Ovary (tissue), 10 donors: ENCODE measurements at regions of chr1 and their contacts with region 1.

Region 1: GRCh38 chr1:77120950-77121349 is 98.3 kb downstream of the PIGK start:
- DNase-seq: no peak
- H3K4me3 ChIP-seq: no peak overlapping the region
- H3K27ac ChIP-seq: no peak overlapping the region
- H3K4me1 ChIP-seq: no peaks in the 10 kb centered on the region
- H3K27me3 ChIP-seq: no peaks in the 10 kb centered on the region
- CTCF ChIP-seq: no peak
- EP300 ChIP-seq: no peak
- POLR2A ChIP-seq: no peak

Region 2: DNA sequence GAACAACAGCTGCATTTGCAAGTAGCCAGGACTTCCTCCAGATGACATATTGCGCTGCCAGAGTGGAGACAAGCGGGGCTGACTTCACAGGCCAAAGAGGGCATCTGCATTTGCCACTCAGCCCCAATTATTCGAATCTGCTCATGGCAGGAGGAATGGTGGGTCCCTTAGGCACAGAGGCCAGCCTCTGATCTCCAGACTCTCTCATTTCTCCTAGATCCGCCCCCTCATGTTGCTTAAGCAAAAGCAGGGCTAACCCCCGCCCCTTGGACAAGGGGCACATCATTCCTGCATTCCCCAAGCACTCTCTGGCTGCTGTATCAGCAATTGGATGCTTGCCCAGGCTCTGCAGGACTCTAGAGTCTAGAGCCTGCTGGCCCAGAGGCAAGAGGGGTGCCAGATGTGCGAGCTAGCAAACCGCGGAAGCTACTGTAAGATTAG is 784.0 kb before region 1 on chr1:
- intact Hi-C with region 1: loop called in 2 of 4 experiments (anchors 5 to 10 kb)
- DNase-seq: peak; percentile 54 to 87 (median 80)
- H3K4me3 ChIP-seq: no peak overlapping the region
- H3K27ac ChIP-seq: no peak overlapping the region
- H3K4me1 ChIP-seq: peaks cover 9% of the 10 kb centered on the region
- H3K27me3 ChIP-seq: no peaks in the 10 kb centered on the region
- CTCF ChIP-seq: no peak
- EP300 ChIP-seq: no peak
- POLR2A ChIP-seq: no peak